Aorta (tissue), 5 donors: ENCODE measurements at regions of chr21 and their contacts with region 1.

Region 1: GRCh38 chr21:42878993-42879787 is at the start of gene WDR4:
- DNase-seq: peak; percentile 98 to 99
- ATAC-seq: peak; percentile 100
- H3K4me3 ChIP-seq: peak within 1 kb of the TSS; percentile 73 to 74
- H3K27ac ChIP-seq: peak within 1 kb of the TSS in 1 of 2 donors; percentile 74
- H3K4me1 ChIP-seq: peaks cover 0 to 3% of the 10 kb centered on the region in 2 donors
- H3K27me3 ChIP-seq: no peaks in the 10 kb centered on the region
- total RNA-seq, gene WDR4: 13.3 to 13.9 TPM

Region 2: DNA sequence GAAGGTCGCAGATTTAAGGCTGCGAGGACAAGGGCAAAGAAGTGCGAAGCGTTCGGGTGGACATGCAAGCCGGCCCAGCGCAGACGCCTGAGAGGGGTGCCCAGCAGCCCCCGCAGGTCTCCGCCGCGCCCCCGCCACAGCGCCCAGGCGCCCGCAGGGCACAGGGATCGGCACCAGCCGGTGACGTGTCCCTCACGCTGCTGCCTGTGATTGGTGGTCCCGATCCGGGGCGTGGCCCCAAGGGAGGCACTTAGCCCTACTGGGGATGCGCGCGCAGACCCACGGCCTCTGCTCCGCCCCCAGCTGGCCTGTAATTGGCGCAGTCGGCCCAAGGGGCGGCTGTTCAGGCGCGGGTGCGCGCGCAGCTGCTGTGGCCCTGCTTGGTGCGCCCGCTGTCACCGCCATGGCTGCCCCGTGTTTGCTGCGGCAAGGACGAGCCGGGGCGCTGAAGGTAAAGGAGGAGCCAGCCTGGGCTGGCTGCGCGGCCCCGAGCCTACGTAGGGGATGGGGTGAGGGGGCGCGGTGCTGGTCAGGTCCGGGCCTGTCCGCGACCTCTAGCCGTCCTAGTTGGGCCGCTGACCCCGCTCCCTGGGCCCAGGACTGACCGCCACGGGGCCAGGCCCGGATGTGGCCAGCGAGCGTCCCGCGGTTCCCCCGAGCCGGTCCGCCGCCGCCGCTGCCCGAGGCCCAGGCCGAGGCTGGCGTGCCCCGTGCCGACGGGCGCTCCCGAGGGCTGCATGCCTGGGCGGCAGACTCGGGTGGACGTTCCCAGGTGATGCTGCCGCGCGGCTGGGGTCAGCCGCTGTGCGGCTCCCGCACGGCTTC is 14.0 kb after region 1 on chr21 and contains the start of gene NDUFV3:
- intact Hi-C with region 1: loop called in 1 of 2 experiments (anchors 2 kb)
- DNase-seq: peak; percentile 100
- ATAC-seq: peak; percentile 99
- H3K4me3 ChIP-seq: peak within 1 kb of the TSS; percentile 73 to 77
- H3K27ac ChIP-seq: peak within 1 kb of the TSS; percentile 62 to 68
- H3K4me1 ChIP-seq: no peaks in the 10 kb centered on the region
- H3K27me3 ChIP-seq: no peaks in the 10 kb centered on the region
- total RNA-seq, gene NDUFV3: 29.7 to 34.4 TPM